Mammary epithelial cell (primary cell): ENCODE measurements at regions of chr11 and their contacts with region 1.

Region 1: DNA sequence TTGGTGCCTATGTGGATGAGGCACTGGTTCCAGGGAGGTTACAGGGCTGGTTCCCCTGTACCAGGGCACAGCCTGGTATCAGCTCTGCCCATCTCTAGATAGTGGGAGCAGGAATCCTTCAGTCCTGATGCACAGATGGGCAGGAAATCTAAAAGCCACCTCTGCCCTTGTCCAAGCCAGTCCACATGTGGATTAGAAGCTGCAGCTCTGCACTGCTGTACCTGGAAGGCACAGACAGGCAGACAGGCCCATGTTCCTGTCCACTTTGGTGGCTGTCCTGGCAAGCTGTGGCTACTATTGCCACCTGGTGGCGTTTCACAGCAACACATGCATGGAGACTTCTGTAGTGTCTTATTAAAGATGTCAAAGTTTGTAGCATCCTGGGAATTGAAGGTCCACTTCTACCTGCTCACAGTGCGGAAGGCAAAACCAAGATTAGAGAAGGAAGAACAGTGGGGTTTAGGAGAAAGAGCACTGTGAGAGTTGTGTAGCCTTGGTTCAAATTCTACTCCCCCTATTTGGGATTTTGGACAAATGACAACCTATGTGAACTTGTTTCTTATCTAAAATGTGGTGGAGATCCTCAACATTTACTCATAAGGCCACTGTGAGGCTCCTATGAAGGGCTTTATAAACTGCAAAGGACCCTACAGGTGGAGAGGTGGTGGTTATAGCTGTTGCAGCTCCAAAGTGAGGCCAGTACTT is 30.1 kb downstream of the NAV2 start:
- DNase-seq: peak; percentile 67
- H3K4me3 ChIP-seq: no peak overlapping the region
- H3K27ac ChIP-seq: no peak overlapping the region
- H3K4me1 ChIP-seq: peaks cover 7% of the 10 kb centered on the region
- H3K27me3 ChIP-seq: no peaks in the 10 kb centered on the region
- CTCF ChIP-seq: peak; percentile 86 to 89

Region 2: DNA sequence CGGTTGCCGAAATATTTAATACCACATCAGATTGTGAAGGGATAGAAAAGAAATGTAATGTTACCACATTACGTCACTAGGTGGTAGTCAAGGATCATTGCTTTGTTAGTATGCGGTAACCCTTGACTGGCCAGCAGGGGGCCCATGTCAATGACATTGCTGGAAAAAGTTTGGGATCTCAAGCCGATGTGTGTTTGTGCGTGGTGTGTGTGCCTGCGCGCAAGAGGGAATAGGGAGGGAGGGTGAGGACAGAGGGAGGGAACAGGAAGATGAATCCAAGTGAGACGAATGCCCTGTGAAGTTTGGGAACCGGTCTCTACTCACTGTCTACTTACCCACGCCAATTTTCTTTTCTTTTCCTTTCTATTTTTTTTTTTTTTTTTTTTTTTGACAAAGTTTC is 671.5 kb before region 1 on chr11:
- CTCF ChIA-PET with region 1: no interaction called
- dilution Hi-C with region 1: no loop called
- in situ Hi-C with region 1: loop called in 1 of 2 experiments (anchors 25 kb)
- intact Hi-C with region 1: loop called (anchors 10 kb)
- DNase-seq: peak; percentile 77
- H3K4me3 ChIP-seq: peak overlapping the region in 1 of 3 experiments; percentile 23
- H3K27ac ChIP-seq: no peak overlapping the region
- H3K4me1 ChIP-seq: no peaks in the 10 kb centered on the region
- H3K27me3 ChIP-seq: no peaks in the 10 kb centered on the region
- CTCF ChIP-seq: peak; percentile 96 to 98

Region 3: DNA sequence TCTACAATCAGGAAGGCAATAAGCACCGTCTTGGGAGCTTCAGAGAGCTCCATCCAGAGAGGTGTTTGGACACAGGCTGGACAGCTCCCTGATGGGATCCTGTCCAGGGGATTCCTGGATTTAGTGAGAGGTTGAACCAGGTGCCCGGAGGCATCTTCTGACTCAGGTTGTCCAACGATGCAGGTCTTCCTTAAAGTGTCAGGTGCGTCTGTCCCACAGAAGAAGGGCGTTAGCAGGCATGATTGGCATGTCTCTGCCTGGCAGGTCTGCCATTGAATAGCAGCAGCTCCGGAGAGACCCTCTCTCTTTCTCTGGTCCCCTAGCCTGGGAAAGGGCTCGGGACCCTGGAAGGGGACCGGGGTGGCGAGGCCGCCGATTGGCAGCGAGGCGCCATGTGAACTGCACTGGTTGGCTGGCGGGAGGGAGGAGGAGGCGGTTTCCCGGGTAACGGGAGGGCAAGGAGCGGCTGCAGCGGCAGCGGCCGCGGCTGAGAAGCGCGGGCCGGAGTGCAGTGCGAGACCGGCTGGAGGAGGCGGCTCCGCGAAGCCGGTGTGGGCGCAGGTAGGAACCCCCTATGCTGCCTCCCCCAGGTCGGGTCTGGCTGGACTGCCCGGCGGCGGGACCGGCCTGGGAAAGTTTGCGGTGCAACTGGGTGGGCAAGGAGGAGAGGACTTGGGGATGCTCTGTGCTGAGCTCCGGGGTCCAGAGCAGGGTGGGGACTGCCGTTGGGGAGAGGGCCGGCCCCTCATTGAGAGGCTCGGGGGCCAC is 397.8 kb before region 1 on chr11:
- CTCF ChIA-PET with region 1: no interaction called
- dilution Hi-C with region 1: no loop called
- in situ Hi-C with region 1: loop called in 1 of 2 experiments (anchors 25 kb)
- intact Hi-C with region 1: no loop called
- DNase-seq: peak; percentile 75
- H3K4me3 ChIP-seq: no peak overlapping the region
- H3K27ac ChIP-seq: no peak overlapping the region
- H3K4me1 ChIP-seq: peaks cover 17% of the 10 kb centered on the region
- H3K27me3 ChIP-seq: peaks cover 50% of the 10 kb centered on the region
- CTCF ChIP-seq: no peak

Region 4: GRCh38 chr11:19561011-19561410 is 181.7 kb before region 1 on chr11:
- CTCF ChIA-PET with region 1: interaction called, 3 read pairs
- dilution Hi-C with region 1: loop called (anchors 25 kb)
- in situ Hi-C with region 1: loop called (anchors 5 kb)
- intact Hi-C with region 1: loop called (anchors 1 kb)
- DNase-seq: no peak
- H3K4me3 ChIP-seq: no peak overlapping the region
- H3K27ac ChIP-seq: no peak overlapping the region
- H3K4me1 ChIP-seq: peaks cover 5% of the 10 kb centered on the region
- H3K27me3 ChIP-seq: no peaks in the 10 kb centered on the region
- CTCF ChIP-seq: no peak

Region 5: DNA sequence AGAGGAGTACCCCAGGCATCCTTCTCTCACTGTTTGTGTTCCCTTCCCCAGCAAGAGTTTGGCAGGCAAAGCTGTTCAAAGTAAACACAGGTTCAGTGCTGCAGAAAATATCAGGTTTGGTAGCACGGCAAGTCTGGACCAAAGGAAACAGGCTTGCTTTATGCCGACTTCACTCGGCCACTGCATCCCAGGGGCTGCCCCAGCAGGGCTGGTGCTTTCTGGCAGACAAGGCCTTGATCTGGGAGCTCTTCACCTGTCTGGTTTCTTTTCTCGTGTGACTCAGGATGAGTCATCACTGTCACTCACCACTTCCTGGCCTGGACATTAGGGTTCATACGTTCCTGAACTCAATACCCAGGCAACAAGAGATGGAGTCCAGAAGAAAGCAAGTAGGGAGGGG is 82.7 kb before region 1 on chr11:
- CTCF ChIA-PET with region 1: no interaction called
- dilution Hi-C with region 1: no loop called
- in situ Hi-C with region 1: no loop called
- intact Hi-C with region 1: loop called (anchors 2 kb)
- DNase-seq: peak; percentile 98
- H3K4me3 ChIP-seq: no peak overlapping the region
- H3K27ac ChIP-seq: peak overlapping the region; percentile 69
- H3K4me1 ChIP-seq: peaks cover 39% of the 10 kb centered on the region
- H3K27me3 ChIP-seq: no peaks in the 10 kb centered on the region
- CTCF ChIP-seq: no peak

Region 6: GRCh38 chr11:19769820-19770219 is 27.1 kb after region 1 on chr11:
- CTCF ChIA-PET with region 1: no interaction called
- dilution Hi-C with region 1: no loop called
- in situ Hi-C with region 1: no loop called
- intact Hi-C with region 1: no loop called
- DNase-seq: peak; percentile 55
- H3K4me3 ChIP-seq: no peak overlapping the region
- H3K27ac ChIP-seq: no peak overlapping the region
- H3K4me1 ChIP-seq: no peaks in the 10 kb centered on the region
- H3K27me3 ChIP-seq: no peaks in the 10 kb centered on the region
- CTCF ChIP-seq: no peak